Endothelial cell of umbilical vein (primary cell): ENCODE measurements at regions of chr1 and their contacts with region 1.

Region 1: GRCh38 chr1:113042285-113043143 is 30.5 kb upstream of the LRIG2 start:
- DNase-seq: peak; percentile 96
- H3K4me3 ChIP-seq: peak overlapping the region in 1 of 3 experiments; percentile 29
- H3K27ac ChIP-seq: peak overlapping the region; percentile 84
- H3K4me1 ChIP-seq: peaks cover 40% of the 10 kb centered on the region
- H3K27me3 ChIP-seq: no peaks in the 10 kb centered on the region
- CTCF ChIP-seq: peak; percentile 50 to 56
- POLR2A ChIP-seq: no peak

Region 2: GRCh38 chr1:112344754-112345423 is 697.6 kb before region 1 on chr1:
- CTCF ChIA-PET with region 1: no interaction called
- POLR2A ChIA-PET with region 1: no interaction called
- dilution Hi-C with region 1: no loop called
- intact Hi-C with region 1: no loop called
- DNase-seq: no peak
- H3K4me3 ChIP-seq: no peak overlapping the region
- H3K27ac ChIP-seq: no peak overlapping the region
- H3K4me1 ChIP-seq: no peaks in the 10 kb centered on the region
- H3K27me3 ChIP-seq: peaks cover 16 to 29% of the 10 kb centered on the region in 2 experiments
- CTCF ChIP-seq: no peak
- POLR2A ChIP-seq: no peak

Region 3: GRCh38 chr1:112803906-112804762 is 238.4 kb before region 1 on chr1:
- CTCF ChIA-PET with region 1: interaction called, 23 read pairs
- POLR2A ChIA-PET with region 1: no interaction called
- dilution Hi-C with region 1: no loop called
- intact Hi-C with region 1: loop called (anchors 1 kb)
- DNase-seq: peak; percentile 69
- H3K4me3 ChIP-seq: no peak overlapping the region
- H3K27ac ChIP-seq: no peak overlapping the region
- H3K4me1 ChIP-seq: no peaks in the 10 kb centered on the region
- H3K27me3 ChIP-seq: no peaks in the 10 kb centered on the region
- CTCF ChIP-seq: peak; percentile 77 to 91
- POLR2A ChIP-seq: no peak

Region 4: GRCh38 chr1:112818990-112819689 is 223.4 kb before region 1 on chr1:
- CTCF ChIA-PET with region 1: interaction called, 9 read pairs
- POLR2A ChIA-PET with region 1: no interaction called
- dilution Hi-C with region 1: no loop called
- intact Hi-C with region 1: loop called (anchors 1 kb)
- DNase-seq: peak; percentile 95
- H3K4me3 ChIP-seq: peak overlapping the region in 1 of 3 experiments; percentile 43
- H3K27ac ChIP-seq: peak overlapping the region; percentile 93
- H3K4me1 ChIP-seq: peaks cover 31% of the 10 kb centered on the region
- H3K27me3 ChIP-seq: no peaks in the 10 kb centered on the region
- CTCF ChIP-seq: no peak
- POLR2A ChIP-seq: peak; percentile 18

Region 5: GRCh38 chr1:112882271-112882744 is 160.2 kb before region 1 on chr1:
- CTCF ChIA-PET with region 1: interaction called, 77 read pairs
- POLR2A ChIA-PET with region 1: interaction called, 5 read pairs
- dilution Hi-C with region 1: no loop called
- intact Hi-C with region 1: loop called (anchors 1 kb)
- DNase-seq: no peak
- H3K4me3 ChIP-seq: no peak overlapping the region
- H3K27ac ChIP-seq: no peak overlapping the region
- H3K4me1 ChIP-seq: no peaks in the 10 kb centered on the region
- H3K27me3 ChIP-seq: no peaks in the 10 kb centered on the region
- CTCF ChIP-seq: no peak
- POLR2A ChIP-seq: no peak

Region 6: DNA sequence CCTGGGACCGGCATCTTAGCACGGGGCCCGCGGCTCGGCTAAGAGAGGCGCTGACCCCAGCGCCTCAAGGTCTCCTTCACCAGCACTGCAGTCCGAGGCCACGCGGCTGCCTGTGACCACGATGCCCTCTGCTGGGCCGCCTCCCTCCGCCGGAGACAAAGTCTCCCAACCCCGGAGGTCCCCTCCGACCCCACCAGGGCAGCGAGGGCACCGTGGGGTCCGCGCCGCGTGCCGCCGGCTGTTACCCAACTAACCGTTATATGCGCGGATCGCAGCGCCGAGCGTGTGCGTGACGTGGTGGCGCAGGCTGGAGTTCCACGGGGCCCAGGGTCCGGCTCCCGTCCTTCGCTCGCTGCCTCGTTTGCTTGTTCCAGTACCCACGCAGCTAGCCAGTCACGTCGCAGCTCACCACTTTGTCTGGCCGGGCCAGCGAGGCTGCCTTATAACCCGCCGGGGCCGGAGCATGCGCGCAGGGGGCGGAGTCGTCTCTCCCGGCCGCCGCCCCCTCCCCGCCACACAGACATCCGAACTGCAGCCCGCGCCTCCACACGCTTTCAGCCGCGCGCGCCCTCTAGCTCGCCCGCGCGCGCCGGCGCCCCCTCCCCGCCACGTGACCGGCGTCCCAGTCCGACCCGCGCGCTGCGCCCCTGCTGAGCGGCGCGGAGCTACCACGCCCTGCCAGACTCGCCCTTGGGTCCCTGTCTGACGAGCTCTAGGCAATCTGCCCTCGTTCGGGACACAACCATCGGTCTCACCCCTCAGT is 86.6 kb before region 1 on chr1 and contains the start of gene SLC16A1:
- CTCF ChIA-PET with region 1: interaction called, 22 read pairs
- POLR2A ChIA-PET with region 1: interaction called, 25 read pairs
- dilution Hi-C with region 1: no loop called
- intact Hi-C with region 1: loop called (anchors 1 kb)
- DNase-seq: peak; percentile 96
- H3K4me3 ChIP-seq: peak within 1 kb of the TSS; percentile 91 to 99 (median 97)
- H3K27ac ChIP-seq: peak within 1 kb of the TSS; percentile 89
- H3K4me1 ChIP-seq: peaks cover 42% of the 10 kb centered on the region
- H3K27me3 ChIP-seq: no peaks in the 10 kb centered on the region
- CTCF ChIP-seq: peak in 1 of 2 donors; percentile 35
- POLR2A ChIP-seq: peak; percentile 99
- total RNA-seq, gene SLC16A1: 117 and 148 TPM in 2 replicates

Region 7: DNA sequence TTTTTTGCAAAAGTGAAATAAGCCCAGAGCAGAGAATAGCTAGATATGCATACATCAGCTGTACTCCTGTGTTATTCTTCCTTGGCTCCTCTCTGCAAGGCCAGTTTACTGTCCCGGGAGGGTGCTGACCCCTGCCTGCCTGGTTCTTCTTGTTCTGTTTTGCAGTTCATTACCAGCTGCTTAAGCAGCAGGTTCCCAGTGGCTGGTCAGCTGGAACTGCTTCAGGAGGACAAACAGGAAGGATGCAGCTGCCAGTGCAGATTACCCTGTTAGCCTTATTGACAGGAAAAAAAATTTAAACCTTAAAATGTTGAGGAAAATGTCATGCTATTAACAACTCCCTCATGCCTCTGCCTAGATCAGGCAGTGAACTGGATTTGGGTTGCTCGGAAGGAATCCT is 14.5 kb after region 1 on chr1:
- CTCF ChIA-PET with region 1: interaction called, 31 read pairs
- POLR2A ChIA-PET with region 1: interaction called, 5 read pairs
- dilution Hi-C with region 1: no loop called
- intact Hi-C with region 1: no loop called
- DNase-seq: peak; percentile 64
- H3K4me3 ChIP-seq: no peak overlapping the region
- H3K27ac ChIP-seq: no peak overlapping the region
- H3K4me1 ChIP-seq: peaks cover 20% of the 10 kb centered on the region
- H3K27me3 ChIP-seq: no peaks in the 10 kb centered on the region
- CTCF ChIP-seq: no peak
- POLR2A ChIP-seq: no peak

Region 8: GRCh38 chr1:113140588-113141446 is 98.3 kb after region 1 on chr1:
- CTCF ChIA-PET with region 1: no interaction called
- POLR2A ChIA-PET with region 1: no interaction called
- dilution Hi-C with region 1: no loop called
- intact Hi-C with region 1: no loop called
- DNase-seq: peak; percentile 64
- H3K4me3 ChIP-seq: no peak overlapping the region
- H3K27ac ChIP-seq: no peak overlapping the region
- H3K4me1 ChIP-seq: peaks cover 26% of the 10 kb centered on the region
- H3K27me3 ChIP-seq: no peaks in the 10 kb centered on the region
- CTCF ChIP-seq: peak; percentile 77 to 87
- POLR2A ChIP-seq: no peak